MCF 10A (cell line): ENCODE measurements at regions of chr6 and their contacts with region 1.

Region 1: DNA sequence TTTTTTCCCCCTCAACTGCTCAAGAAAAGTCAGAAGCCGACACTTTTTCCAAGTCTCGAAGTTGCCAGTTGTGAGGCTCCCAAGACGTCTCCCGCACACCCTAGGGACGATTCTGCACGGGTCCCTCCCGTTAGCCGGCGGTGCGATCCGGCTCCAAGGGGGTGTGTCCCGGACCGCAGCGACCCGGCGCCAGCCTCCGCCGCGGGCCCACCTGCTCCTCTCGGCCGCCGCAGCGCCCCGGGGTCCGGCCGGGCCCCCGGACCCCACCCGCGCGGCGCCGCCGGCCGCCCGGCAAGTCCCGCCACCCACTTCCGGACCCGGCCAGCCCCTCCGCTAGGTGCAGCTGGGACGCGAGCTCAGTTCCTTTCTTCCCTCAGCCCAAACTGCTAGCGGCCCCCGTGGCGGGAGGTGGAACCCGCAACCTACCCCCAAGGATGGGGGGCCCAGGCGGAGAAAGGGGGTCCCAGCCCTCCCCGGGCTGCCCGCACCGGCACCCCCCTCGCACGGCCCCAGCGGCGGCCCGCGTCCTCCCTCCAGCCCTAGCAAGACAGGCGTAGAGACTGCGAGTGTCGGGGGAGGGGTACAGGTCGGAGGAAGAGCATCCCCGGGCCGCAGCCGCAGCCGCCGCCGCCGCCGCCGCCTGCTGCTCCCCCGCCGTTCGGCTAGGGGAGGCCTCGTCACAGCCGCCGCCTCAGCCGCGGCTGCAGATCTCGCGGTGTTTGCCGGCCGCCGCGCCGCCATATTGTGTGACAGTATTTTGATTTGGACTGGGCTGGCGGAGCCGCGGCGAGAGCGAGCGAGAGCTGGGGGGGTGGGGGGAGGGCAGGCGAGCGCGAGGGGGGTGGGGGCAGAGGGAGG is 485 bp upstream of the TAB2 start:
- DNase-seq: peak; percentile 89
- H3K4me3 Mint-ChIP-seq: peak overlapping the region; percentile 82
- H3K27ac Mint-ChIP-seq: peak overlapping the region; percentile 54
- H3K4me1 Mint-ChIP-seq: peaks cover 15% of the 10 kb centered on the region
- H3K27me3 Mint-ChIP-seq: no peaks in the 10 kb centered on the region
- CTCF ChIP-seq: no peak

Region 2: GRCh38 chr6:149082286-149082707 is 234.7 kb before region 1 on chr6:
- CTCF ChIA-PET with region 1: interaction called, 5 read pairs
- POLR2A ChIA-PET with region 1: interaction called, 14 read pairs
- intact Hi-C with region 1: loop called (anchors 5 kb)
- DNase-seq: peak; percentile 78
- H3K4me3 Mint-ChIP-seq: no peak overlapping the region
- H3K27ac Mint-ChIP-seq: no peak overlapping the region
- H3K4me1 Mint-ChIP-seq: peaks cover 11% of the 10 kb centered on the region
- H3K27me3 Mint-ChIP-seq: no peaks in the 10 kb centered on the region
- CTCF ChIP-seq: peak; percentile 72

Region 3: DNA sequence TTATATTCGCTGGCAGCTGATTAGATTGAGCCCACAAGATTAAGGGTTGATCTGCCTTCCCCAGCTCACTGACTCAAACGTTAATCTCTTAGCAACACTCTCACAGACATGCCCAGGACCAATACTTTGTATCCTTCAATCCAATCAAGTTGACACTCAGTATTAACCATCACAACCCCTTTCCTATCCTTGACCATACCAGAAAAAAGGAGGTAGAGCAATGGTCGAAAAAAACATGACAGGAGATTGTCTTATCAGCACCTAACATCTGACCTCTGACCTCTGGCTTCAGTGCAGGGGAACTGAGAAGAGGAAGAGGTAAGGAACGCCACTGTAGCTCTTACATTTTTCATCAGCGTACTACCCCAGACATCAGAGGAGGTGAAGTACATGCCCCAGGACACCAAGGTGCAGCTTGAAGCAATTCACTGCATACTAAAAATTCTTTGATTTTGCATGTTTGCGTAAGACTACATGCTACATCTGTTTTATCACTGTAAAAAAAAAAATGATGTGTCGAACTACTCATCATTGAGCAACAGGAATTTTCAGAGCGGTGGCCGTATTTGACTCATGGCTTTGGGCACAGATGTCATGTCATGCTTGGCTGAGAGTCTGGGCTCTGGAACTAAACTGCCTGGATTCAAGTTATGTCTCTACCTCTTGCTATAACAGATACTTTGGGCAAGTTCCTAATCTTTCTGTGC is 187.5 kb before region 1 on chr6:
- CTCF ChIA-PET with region 1: interaction called, 3 read pairs
- POLR2A ChIA-PET with region 1: interaction called, 3 read pairs
- intact Hi-C with region 1: loop called (anchors 5 kb)
- DNase-seq: peak; percentile 91
- H3K4me3 Mint-ChIP-seq: no peak overlapping the region
- H3K27ac Mint-ChIP-seq: peak overlapping the region; percentile 11
- H3K4me1 Mint-ChIP-seq: peaks cover 30% of the 10 kb centered on the region
- H3K27me3 Mint-ChIP-seq: peaks cover 12% of the 10 kb centered on the region
- CTCF ChIP-seq: no peak

Region 4: GRCh38 chr6:149293244-149293643 is 23.8 kb before region 1 on chr6:
- CTCF ChIA-PET with region 1: no interaction called
- POLR2A ChIA-PET with region 1: interaction called, 10 read pairs
- intact Hi-C with region 1: no loop called
- DNase-seq: no peak
- H3K4me3 Mint-ChIP-seq: no peak overlapping the region
- H3K27ac Mint-ChIP-seq: no peak overlapping the region
- H3K4me1 Mint-ChIP-seq: no peaks in the 10 kb centered on the region
- H3K27me3 Mint-ChIP-seq: no peaks in the 10 kb centered on the region
- CTCF ChIP-seq: no peak

Region 5: DNA sequence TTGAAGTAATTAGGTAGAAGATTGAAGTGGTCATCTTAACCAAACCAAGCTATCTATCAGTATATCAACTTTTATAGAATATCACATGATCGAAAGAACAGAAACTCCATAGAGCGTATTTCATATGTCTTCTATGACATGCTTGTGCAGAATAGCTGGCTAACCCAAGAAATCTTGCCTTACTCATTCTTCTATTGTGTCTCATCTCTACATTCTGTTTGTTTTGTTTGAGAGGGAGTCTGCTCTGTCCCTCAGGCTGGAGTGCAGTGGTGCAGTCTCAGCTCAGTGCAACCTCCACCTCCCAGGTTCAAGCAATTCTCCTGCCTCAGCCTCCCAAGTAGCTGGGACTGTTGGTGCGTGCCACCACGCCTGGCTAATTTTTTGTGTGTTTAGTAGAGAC is 11.1 kb after region 1 on chr6:
- CTCF ChIA-PET with region 1: no interaction called
- POLR2A ChIA-PET with region 1: interaction called, 392 read pairs
- intact Hi-C with region 1: no loop called
- DNase-seq: no peak
- H3K4me3 Mint-ChIP-seq: no peak overlapping the region
- H3K27ac Mint-ChIP-seq: no peak overlapping the region
- H3K4me1 Mint-ChIP-seq: peaks cover 51% of the 10 kb centered on the region
- H3K27me3 Mint-ChIP-seq: no peaks in the 10 kb centered on the region
- CTCF ChIP-seq: no peak

Region 6: GRCh38 chr6:149335924-149336608 is 19.0 kb after region 1 on chr6:
- CTCF ChIA-PET with region 1: interaction called, 5 read pairs
- POLR2A ChIA-PET with region 1: interaction called, 392 read pairs
- intact Hi-C with region 1: loop called (anchors 2 kb)
- DNase-seq: peak; percentile 90
- H3K4me3 Mint-ChIP-seq: peak overlapping the region; percentile 36
- H3K27ac Mint-ChIP-seq: peak overlapping the region; percentile 89
- H3K4me1 Mint-ChIP-seq: peaks cover 63% of the 10 kb centered on the region
- H3K27me3 Mint-ChIP-seq: no peaks in the 10 kb centered on the region
- CTCF ChIP-seq: no peak

Region 7: GRCh38 chr6:149405823-149406765 is 89.1 kb after region 1 on chr6:
- CTCF ChIA-PET with region 1: no interaction called
- POLR2A ChIA-PET with region 1: interaction called, 4 read pairs
- intact Hi-C with region 1: loop called (anchors 5 kb)
- DNase-seq: peak; percentile 51
- H3K4me3 Mint-ChIP-seq: no peak overlapping the region
- H3K27ac Mint-ChIP-seq: peak overlapping the region; percentile 75
- H3K4me1 Mint-ChIP-seq: peaks cover 17% of the 10 kb centered on the region
- H3K27me3 Mint-ChIP-seq: no peaks in the 10 kb centered on the region
- CTCF ChIP-seq: no peak